ENCODE measurements at regions of chr19 and their contacts with region 1.

Region 1: GRCh38 chr19:45607071-45608029 is 5.3 kb upstream of the GPR4 start:
- DNase-seq: peak in 1 of 2 donors; percentile 83
- H3K4me3 ChIP-seq: peak overlapping the region; percentile 17 to 41
- H3K27ac ChIP-seq: peak overlapping the region in 1 of 2 donors; percentile 20
- H3K4me1 ChIP-seq: peaks cover 0 to 7% of the 10 kb centered on the region in 2 donors
- H3K27me3 ChIP-seq: peaks cover 10% of the 10 kb centered on the region
- CTCF ChIP-seq: peak; percentile 83 to 92 (median 92)

Region 2: DNA sequence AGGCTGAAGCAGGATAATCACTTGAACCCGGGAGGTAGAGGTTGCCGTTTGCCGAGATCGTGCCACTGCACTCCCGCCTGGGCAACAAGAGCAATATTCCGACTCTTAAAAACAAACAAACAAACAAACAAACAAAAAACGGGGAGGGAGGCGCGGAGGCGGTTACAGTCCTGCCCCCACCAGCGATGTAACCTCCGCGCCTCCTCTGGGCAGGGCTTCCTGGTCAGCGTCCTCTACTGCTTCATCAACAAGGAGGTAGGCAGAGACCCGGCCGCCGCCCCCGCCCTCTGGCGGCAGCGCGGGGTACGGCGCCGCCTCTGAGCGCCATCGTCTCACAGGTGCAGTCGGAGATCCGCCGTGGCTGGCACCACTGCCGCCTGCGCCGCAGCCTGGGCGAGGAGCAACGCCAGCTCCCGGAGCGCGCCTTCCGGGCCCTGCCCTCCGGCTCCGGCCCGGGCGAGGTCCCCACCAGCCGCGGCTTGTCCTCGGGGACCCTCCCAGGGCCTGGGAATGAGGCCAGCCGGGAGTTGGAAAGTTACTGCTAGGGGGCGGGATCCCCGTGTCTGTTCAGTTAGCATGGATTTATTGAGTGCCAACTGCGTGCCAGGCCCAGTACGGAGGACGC is 74.2 kb after region 1 on chr19:
- intact Hi-C with region 1: loop called (anchors 5 kb)
- DNase-seq: peak; percentile 74 to 94
- H3K4me3 ChIP-seq: peak overlapping the region; percentile 43 to 57
- H3K27ac ChIP-seq: peak overlapping the region; percentile 67 to 68
- H3K4me1 ChIP-seq: peaks cover 0 to 3% of the 10 kb centered on the region in 2 donors
- H3K27me3 ChIP-seq: peaks cover 17% of the 10 kb centered on the region
- CTCF ChIP-seq: peak; percentile 97 to 98 (median 98)